Naive thymus-derived CD4-positive, alpha-beta T cell (primary cell): ENCODE measurements at regions of chr10 and their contacts with region 1.

Region 1: DNA sequence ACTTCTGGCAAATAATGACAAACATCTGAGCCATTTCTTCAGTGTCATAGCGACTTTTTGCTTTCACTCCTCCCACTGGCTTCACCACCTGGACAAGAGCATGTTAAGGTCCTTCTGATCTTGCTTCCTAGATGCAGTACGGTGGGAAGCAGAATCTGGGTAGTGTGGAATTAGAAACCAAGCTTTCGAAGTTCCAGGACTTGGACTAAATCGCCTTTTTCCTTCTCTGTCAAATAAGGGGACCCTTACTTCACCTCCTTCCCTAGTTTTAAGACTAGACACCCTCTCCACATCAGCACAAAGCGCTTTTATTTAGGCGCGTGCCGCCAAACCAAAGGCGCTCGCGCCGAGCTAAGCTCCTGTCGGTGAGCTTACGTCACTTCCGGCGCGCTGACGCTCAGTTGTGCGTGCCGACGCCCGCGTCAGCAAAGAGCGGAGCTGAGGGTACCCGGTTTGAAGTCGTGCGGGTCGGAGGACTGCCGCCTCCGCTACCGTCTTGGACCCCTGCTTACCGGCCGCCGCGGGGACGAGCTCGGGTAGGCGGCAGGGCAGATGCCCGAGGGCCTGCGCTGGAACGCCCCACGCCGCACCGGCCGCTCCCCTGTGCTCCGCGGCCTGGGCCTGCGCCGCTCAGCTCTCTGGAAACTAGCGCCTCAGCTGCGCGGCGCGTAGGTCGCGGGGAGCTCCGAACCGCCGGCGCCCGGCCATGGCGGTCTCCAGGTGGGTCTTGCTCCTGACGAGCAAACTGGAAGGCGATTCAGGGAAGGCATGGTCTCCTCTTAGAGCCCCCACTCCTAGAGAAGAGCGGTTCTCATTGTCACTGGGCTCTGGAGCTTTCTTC is at the start of gene BTAF1:
- DNase-seq: peak; percentile 86 to 93 (median 91)
- ATAC-seq: peak; percentile 97
- H3K4me3 ChIP-seq: peak within 1 kb of the TSS; percentile 70
- H3K4me3 Mint-ChIP-seq: peak within 1 kb of the TSS; percentile 91 to 100 (median 96)
- H3K27ac ChIP-seq: peak within 1 kb of the TSS; percentile 96
- H3K27ac Mint-ChIP-seq: peak within 1 kb of the TSS; percentile 97 to 99 (median 98)
- H3K4me1 ChIP-seq: peaks cover 9 to 25% of the 10 kb centered on the region in 2 donors
- H3K4me1 Mint-ChIP-seq: peaks cover 22 to 62% (median 45%) of the 10 kb centered on the region in 7 donors
- H3K27me3 ChIP-seq: no peaks in the 10 kb centered on the region
- H3K27me3 Mint-ChIP-seq: peaks cover under 1 to 8% (median 5%) of the 10 kb centered on the region in 5 donors
- total RNA-seq, gene BTAF1: 55.7 to 84.8 (median 78.5) TPM

Region 2: DNA sequence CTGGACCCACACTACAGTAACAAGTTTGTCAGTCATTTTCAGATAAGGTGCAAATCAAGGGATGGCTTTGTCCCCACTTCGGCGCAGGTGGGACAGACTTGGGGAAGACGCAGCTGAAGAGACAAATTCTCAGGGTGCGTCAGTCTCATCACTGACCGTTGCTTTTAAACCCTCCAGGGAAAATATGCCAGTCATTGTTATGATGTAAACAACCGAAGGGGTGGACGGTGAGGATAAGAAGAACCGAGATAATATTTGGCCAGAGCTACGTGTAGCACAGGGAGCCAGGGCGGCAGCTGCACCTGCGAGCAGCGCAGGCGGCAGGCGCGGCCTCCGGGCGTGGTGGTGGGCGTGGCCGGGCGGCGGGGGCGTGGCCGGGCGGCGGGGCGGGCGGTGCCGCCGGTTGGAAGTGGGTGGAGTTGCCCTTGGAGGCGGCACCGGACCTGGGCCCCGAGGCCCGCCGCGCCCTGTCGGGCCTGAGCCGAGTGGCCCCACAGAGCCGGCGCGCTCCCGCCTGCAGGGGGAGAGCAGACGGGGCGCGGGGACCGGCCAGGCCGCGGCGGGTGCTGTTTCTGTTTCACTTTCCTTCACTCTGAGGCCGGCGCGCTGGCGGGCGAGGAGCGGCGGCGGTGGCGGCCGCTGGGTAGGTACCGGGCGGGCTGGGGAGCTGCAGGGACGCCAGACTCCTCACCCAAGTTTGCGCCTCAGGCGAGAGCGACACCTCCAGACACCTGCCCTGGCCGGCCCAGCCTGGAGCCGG is 703.2 kb before region 1 on chr10 and contains the start of gene PCGF5:
- CTCF ChIA-PET with region 1: no interaction called
- POLR2A ChIA-PET with region 1: no interaction called
- intact Hi-C with region 1: loop called in 1 of 2 experiments (anchors 10 kb)
- DNase-seq: peak; percentile 82 to 98 (median 90)
- ATAC-seq: peak; percentile 98
- H3K4me3 ChIP-seq: peak within 1 kb of the TSS; percentile 68
- H3K4me3 Mint-ChIP-seq: peak within 1 kb of the TSS; percentile 84 to 96 (median 90)
- H3K27ac ChIP-seq: peak within 1 kb of the TSS; percentile 90
- H3K27ac Mint-ChIP-seq: peak within 1 kb of the TSS; percentile 76 to 95 (median 89)
- H3K4me1 ChIP-seq: peaks cover 28 to 34% of the 10 kb centered on the region in 2 donors
- H3K4me1 Mint-ChIP-seq: peaks cover 33 to 69% (median 55%) of the 10 kb centered on the region in 7 donors
- H3K27me3 ChIP-seq: no peaks in the 10 kb centered on the region
- H3K27me3 Mint-ChIP-seq: no peaks in the 10 kb centered on the region
- total RNA-seq, gene PCGF5: 41.2 to 62.3 (median 57.4) TPM

Region 3: DNA sequence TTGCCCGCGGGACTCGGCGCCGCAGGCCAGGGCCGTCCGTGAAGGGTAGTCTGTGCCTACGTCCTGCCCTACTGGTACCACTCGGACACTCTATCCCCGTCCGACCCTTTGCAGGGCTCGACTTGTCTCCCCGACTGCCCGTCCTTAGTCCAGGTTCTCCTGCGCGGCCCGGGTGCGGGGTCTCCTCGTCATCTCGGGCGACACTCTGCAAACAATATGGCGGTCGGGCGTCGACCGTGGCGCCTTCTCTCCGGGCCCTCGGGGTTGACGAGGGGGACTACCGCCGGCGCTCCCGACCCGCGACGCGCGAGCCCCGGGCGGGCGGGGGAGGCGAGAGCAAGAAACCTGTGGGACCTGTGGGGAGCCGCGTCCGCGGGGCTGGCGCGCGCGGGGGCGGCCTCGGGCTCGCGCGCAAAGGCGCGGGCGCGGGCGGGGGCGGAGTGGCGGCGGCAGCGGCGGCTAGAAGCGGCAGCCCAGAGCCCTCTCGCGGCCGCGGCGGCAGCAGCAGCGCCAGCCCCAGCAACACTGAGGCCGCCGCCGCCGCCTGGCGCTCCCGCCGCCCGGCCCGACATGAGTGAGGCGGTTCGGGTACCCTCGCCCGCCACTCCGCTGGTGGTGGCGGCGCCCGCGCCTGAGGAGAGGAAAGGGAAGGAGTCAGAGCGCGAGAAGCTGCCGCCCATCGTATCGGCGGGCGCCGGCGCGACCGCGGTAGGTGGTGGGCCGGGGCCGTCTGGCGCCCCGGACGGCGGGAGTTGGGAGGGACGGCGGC is 513.5 kb before region 1 on chr10 and contains the start of gene HECTD2:
- CTCF ChIA-PET with region 1: no interaction called
- POLR2A ChIA-PET with region 1: interaction called, 4 read pairs
- intact Hi-C with region 1: loop called in 1 of 2 experiments (anchors 1 kb)
- DNase-seq: peak; percentile 76 to 89 (median 86)
- ATAC-seq: peak; percentile 93
- H3K4me3 ChIP-seq: peak within 1 kb of the TSS; percentile 83
- H3K4me3 Mint-ChIP-seq: peak within 1 kb of the TSS; percentile 75 to 93 (median 90)
- H3K27ac ChIP-seq: peak within 1 kb of the TSS; percentile 88
- H3K27ac Mint-ChIP-seq: peak within 1 kb of the TSS; percentile 81 to 96 (median 91)
- H3K4me1 ChIP-seq: peaks cover 8 to 17% of the 10 kb centered on the region in 2 donors
- H3K4me1 Mint-ChIP-seq: peaks cover 8 to 18% (median 13%) of the 10 kb centered on the region in 7 donors
- H3K27me3 ChIP-seq: no peaks in the 10 kb centered on the region
- H3K27me3 Mint-ChIP-seq: peaks cover 0 to 27% (median 0%) of the 10 kb centered on the region in 5 donors
- total RNA-seq, gene HECTD2: 1.1 to 4.6 (median 2.0) TPM

Region 4: DNA sequence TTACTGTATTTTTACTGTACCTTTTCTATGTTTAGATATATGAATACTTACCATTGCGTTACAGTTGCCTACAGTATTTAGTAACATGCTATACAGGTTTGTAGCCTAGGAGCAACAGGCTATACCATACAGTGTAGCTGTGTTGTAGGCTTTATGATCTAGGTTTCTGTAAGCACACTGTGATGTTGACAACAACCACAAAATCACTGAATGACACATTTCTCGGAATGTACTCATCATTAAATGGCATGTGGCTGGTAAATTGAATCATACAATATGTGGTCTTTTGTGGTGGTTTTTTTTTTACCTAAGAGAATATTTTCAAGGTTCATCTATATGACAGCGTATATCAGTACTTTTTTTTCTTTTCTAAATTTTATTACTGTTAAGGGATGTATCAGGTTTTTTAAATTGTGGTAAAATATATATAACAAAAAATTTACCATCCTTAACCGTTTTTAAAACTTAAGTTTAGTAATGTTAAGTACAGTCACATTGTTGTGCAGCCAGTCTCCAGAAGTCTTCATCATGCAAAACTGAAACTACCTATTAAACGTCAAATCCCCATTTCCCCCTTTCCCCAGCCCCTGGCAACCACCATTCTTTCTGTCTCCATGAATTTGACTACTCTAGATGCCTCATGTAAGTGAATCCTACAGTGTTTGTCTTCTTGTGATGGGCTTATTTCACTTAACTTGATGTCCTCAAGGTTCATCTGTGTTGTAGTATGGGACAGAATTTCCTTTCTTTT is 21.5 kb after region 1 on chr10:
- CTCF ChIA-PET with region 1: no interaction called
- POLR2A ChIA-PET with region 1: no interaction called
- intact Hi-C with region 1: loop called in 1 of 2 experiments (anchors 2 kb)
- DNase-seq: no peak
- ATAC-seq: peak; percentile 48
- H3K4me3 ChIP-seq: no peak overlapping the region
- H3K4me3 Mint-ChIP-seq: no peak overlapping the region
- H3K27ac ChIP-seq: no peak overlapping the region
- H3K27ac Mint-ChIP-seq: peak overlapping the region in 4 of 9 donors; percentile 19 to 86 (median 58)
- H3K4me1 ChIP-seq: no peaks in the 10 kb centered on the region
- H3K4me1 Mint-ChIP-seq: peaks cover 0 to 18% (median 4%) of the 10 kb centered on the region in 7 donors
- H3K27me3 ChIP-seq: no peaks in the 10 kb centered on the region
- H3K27me3 Mint-ChIP-seq: no peaks in the 10 kb centered on the region

Region 5: GRCh38 chr10:92240289-92241157 is 316.9 kb after region 1 on chr10:
- CTCF ChIA-PET with region 1: no interaction called
- POLR2A ChIA-PET with region 1: no interaction called
- intact Hi-C with region 1: loop called in 1 of 2 experiments (anchors 5 kb)
- DNase-seq: peak in 8 of 9 donors; percentile 19 to 43 (median 28)
- ATAC-seq: peak; percentile 58
- H3K4me3 ChIP-seq: peak overlapping the region; percentile 78
- H3K4me3 Mint-ChIP-seq: peak overlapping the region; percentile 88 to 99 (median 92)
- H3K27ac ChIP-seq: peak overlapping the region; percentile 58
- H3K27ac Mint-ChIP-seq: peak overlapping the region; percentile 31 to 94 (median 71)
- H3K4me1 ChIP-seq: peaks cover 0 to 11% of the 10 kb centered on the region in 2 donors
- H3K4me1 Mint-ChIP-seq: peaks cover 14 to 57% (median 31%) of the 10 kb centered on the region in 7 donors
- H3K27me3 ChIP-seq: no peaks in the 10 kb centered on the region
- H3K27me3 Mint-ChIP-seq: peaks cover 0 to 37% (median 0%) of the 10 kb centered on the region in 5 donors

Region 6: GRCh38 chr10:92290837-92291615 is 367.4 kb after region 1 on chr10 and contains the starts of genes CPEB3 and MARCHF5:
- CTCF ChIA-PET with region 1: no interaction called
- POLR2A ChIA-PET with region 1: interaction called, 4 read pairs
- intact Hi-C with region 1: loop called (anchors 1 to 5 kb)
- DNase-seq: peak; percentile 77 to 92 (median 85)
- ATAC-seq: peak; percentile 99
- H3K4me3 ChIP-seq: peak within 1 kb of the TSS; percentile 90
- H3K4me3 Mint-ChIP-seq: peak within 1 kb of the TSS; percentile 85 to 97 (median 95)
- H3K27ac ChIP-seq: peak within 1 kb of the TSS; percentile 90
- H3K27ac Mint-ChIP-seq: peak within 1 kb of the TSS; percentile 75 to 96 (median 88)
- H3K4me1 ChIP-seq: peaks cover 0 to 6% of the 10 kb centered on the region in 2 donors
- H3K4me1 Mint-ChIP-seq: peaks cover 21 to 41% (median 31%) of the 10 kb centered on the region in 7 donors
- H3K27me3 ChIP-seq: no peaks in the 10 kb centered on the region
- H3K27me3 Mint-ChIP-seq: no peaks in the 10 kb centered on the region
- total RNA-seq, gene CPEB3: 2.0 to 3.3 (median 2.2) TPM
- total RNA-seq, gene MARCHF5: 22.0 to 37.1 (median 33.8) TPM

Region 7: DNA sequence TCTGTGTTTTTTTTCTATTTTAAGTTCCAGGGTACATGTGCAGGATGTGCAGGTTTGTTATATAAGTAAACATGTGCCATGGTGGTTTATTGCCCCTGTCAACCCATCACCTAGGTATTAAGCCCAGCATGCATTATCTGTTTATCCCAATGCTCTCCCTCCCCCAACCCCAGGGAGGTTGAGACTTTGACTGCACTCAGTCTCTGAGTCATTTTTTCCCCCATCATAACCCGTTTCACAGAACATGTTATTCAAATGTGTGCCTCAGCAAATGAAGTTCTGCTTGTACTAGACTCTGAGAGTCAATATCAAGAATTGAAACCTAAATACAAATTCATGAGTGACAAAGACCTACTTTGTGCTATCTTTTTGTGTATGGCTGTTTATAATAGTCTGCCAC is 1067.0 kb after region 1 on chr10:
- CTCF ChIA-PET with region 1: no interaction called
- POLR2A ChIA-PET with region 1: no interaction called
- intact Hi-C with region 1: no loop called
- DNase-seq: no peak
- ATAC-seq: no peak
- H3K4me3 ChIP-seq: no peak overlapping the region
- H3K4me3 Mint-ChIP-seq: no peak overlapping the region
- H3K27ac ChIP-seq: no peak overlapping the region
- H3K27ac Mint-ChIP-seq: peak overlapping the region in 1 of 9 donors; percentile 19
- H3K4me1 ChIP-seq: no peaks in the 10 kb centered on the region
- H3K4me1 Mint-ChIP-seq: peaks cover 0 to 19% (median 14%) of the 10 kb centered on the region in 7 donors
- H3K27me3 ChIP-seq: no peaks in the 10 kb centered on the region
- H3K27me3 Mint-ChIP-seq: no peaks in the 10 kb centered on the region

Region 8: DNA sequence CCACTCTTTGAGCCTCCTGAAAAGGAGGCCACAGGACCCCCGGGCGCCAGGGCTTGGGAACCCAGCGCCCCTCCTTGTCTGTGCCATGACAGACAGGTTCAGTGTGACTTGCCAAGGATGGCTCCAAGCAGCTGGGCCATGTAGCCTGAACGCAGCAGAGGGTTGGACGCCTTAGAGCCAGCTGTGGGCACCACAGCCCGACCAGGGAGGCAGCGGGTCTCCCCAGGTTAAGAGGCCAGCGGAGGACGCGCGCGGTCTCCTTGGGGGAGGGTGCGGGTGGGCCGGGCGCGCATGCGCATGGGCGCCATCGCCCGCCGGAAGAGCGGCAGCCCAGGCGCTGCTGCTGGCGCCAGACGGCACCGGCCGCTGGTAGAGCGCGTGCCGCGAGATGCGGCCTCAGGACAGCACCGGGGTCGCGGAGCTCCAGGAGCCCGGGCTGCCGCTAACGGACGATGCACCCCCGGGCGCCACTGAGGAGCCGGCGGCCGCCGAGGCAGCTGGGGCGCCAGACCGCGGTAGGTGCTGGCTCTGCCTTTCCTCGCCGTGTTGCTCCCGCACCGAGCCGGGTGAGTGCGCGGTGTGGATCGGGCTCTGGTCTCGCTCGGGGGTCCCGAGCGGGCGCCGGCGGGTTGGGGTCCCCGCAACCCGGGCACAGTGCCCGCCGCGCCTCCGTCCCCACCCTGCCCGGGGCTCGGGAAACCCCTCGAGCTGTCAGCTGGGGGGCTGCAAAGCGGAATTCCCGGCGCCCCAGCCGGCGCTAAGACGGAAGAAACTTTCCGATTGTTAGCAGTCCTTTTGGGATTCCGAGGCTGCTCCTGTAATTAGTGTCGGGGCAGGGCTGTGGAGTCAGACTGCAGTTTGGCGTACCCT is 1970.3 kb after region 1 on chr10 and contains the start of gene SLC35G1:
- CTCF ChIA-PET with region 1: no interaction called
- POLR2A ChIA-PET with region 1: no interaction called
- intact Hi-C with region 1: loop called in 1 of 2 experiments (anchors 10 kb)
- DNase-seq: peak; percentile 48 to 75 (median 66)
- ATAC-seq: peak; percentile 89
- H3K4me3 ChIP-seq: peak within 1 kb of the TSS; percentile 72
- H3K4me3 Mint-ChIP-seq: peak within 1 kb of the TSS; percentile 81 to 91 (median 86)
- H3K27ac ChIP-seq: peak within 1 kb of the TSS; percentile 62
- H3K27ac Mint-ChIP-seq: peak within 1 kb of the TSS; percentile 56 to 81 (median 74)
- H3K4me1 ChIP-seq: peaks cover 6 to 18% of the 10 kb centered on the region in 2 donors
- H3K4me1 Mint-ChIP-seq: peaks cover 23 to 47% (median 40%) of the 10 kb centered on the region in 7 donors
- H3K27me3 ChIP-seq: no peaks in the 10 kb centered on the region
- H3K27me3 Mint-ChIP-seq: peaks cover 0 to 9% (median 7%) of the 10 kb centered on the region in 5 donors
- total RNA-seq, gene SLC35G1: 2.4 to 7.2 (median 3.5) TPM